Motor neuron (in vitro differentiated cells): ENCODE measurements at regions of chr10 and their contacts with region 1.

Region 1: DNA sequence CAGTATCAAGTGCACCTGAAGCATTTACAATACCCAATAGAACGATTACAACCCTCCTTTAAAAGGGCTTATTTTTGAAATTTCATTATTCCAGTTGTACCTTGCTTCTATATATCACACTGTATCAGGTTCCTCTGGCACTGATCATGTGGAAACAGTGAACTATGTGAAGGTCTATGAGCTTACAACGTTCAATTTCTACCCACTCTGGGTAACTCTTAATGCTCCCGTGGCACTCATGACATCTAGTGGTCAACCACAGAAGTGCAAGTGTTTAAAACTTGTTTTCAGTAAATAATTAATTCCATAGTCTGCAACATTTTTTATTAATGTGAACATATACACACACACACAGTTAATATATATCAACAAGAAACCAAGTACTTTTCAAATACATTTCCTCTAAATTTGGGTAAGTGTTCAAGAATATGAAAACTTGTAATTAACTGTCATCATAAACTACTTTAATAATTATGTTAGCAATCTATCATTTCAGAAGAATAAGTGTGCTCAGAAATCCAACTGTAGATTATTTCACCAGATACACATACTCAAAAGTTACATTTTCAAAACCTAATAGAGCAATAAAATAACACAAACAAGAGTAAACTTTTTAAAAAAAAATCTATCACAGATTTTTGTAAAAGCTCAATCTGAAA is 61.0 kb downstream of the MPP7 start:
- ATAC-seq: peak; percentile 76 to 92 (median 86)
- H3K4me3 ChIP-seq: no peak overlapping the region
- H3K27ac ChIP-seq: no peak overlapping the region
- H3K4me1 ChIP-seq: peaks cover 0 to 4% of the 10 kb centered on the region in 2 donors

Region 2: DNA sequence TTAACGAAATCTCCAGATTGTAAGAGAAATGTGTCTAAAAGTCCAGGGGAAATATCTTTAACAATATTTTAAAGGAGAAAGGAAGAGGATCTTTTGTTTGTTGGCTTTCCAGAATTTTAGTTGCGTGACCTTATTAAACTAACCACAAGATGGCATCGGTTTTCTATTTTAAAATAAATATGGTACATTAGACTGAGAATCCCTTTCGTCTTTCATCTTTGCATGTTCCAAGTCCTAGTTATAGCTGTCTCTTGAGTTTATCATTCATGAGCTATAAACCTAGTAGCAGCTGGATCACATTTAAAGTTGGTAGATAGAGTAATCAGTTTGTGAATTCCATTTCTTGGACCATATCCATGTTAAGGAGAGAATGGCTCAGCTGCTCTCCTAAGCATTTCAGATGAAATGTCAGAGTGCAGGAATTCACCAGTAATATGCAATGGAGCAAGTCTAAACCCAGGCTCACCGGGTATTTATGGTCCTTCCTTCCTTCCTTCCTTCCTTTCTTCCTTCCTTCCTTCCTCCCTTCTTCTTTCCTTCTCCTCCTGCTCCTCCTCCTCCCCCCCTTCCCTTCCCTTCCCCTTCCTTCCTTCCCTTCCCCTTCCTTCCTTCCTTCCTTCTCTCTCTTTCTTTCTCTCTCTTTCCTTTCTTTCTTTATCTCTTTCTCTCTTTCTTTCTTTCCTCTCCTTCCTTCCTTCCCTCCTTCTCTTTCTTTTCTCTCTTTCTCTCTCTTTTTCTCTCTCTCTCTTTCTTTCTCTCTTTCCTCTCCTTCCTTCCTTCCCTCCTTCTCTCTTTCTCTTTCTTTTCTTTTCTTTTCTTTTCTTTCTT is 795.6 kb before region 1 on chr10:
- in situ Hi-C with region 1: loop called in 1 of 9 experiments (anchors 25 kb)
- ATAC-seq: peak in 6 of 8 experiments; percentile 34 to 83 (median 59)
- H3K4me3 ChIP-seq: no peak overlapping the region
- H3K27ac ChIP-seq: no peak overlapping the region
- H3K4me1 ChIP-seq: no peaks in the 10 kb centered on the region

Region 3: GRCh38 chr10:28492116-28492920 is 250.4 kb after region 1 on chr10:
- in situ Hi-C with region 1: no loop called
- ATAC-seq: peak in 3 of 8 experiments; percentile 49 to 99 (median 83)
- H3K4me3 ChIP-seq: no peak overlapping the region
- H3K27ac ChIP-seq: no peak overlapping the region
- H3K4me1 ChIP-seq: no peaks in the 10 kb centered on the region

Region 4: DNA sequence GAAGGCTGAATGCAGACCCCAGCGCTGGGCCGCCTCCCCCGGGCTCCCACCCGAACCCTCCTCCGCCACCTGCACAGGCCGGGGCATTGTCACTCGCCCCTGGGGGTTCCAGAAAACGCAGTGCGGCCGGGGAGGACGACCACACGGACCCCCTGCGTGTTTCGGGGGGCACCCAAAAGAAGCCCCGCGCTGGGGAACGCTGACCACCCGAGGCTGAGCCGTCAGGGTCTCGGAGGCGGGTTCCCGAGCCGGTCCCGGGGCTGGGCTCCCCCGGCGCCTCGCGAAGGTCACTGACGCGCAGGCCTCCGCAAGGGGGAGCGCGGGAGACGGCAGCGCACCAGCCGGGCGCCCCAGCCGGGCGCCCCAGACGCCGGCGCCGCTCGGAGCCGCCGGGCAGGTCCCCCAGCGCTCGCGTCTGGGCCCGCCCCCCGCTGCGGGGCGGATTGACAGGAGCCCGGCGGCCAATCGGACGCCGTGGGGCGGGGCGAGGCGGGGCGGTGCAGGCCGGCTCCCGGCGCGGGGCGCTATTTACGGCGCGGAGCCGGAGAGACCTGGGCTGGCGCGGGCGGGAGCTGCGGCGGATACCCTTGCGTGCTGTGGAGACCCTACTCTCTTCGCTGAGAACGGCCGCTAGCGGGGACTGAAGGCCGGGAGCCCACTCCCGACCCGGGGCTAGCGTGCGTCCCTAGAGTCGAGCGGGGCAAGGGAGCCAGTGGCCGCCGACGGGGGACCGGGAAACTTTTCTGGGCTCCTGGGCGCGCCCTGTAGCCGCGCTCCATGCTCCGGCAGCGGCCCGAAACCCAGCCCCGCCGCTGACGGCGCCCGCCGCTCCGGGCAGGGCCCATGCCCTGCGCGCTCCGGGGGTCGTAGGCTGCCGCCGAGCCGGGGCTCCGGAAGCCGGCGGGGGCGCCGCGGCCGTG is 435.4 kb after region 1 on chr10 and contains the start of gene BAMBI:
- in situ Hi-C with region 1: no loop called
- ATAC-seq: peak; percentile 92 to 95 (median 94)
- H3K4me3 ChIP-seq: peak within 1 kb of the TSS; percentile 69 to 84 (median 76)
- H3K27ac ChIP-seq: peak within 1 kb of the TSS in 1 of 2 donors; percentile 56
- H3K4me1 ChIP-seq: peaks cover 16 to 26% of the 10 kb centered on the region in 2 donors
- total RNA-seq, gene BAMBI: 0.97 to 47.8 (median 8.1) TPM